H1 (cell line): ENCODE measurements at regions of chr16 and their contacts with region 1.

Region 1: GRCh38 chr16:71610936-71611871 is 14.8 kb upstream of the MARVELD3 start:
- DNase-seq: peak; percentile 53 to 98
- H3K4me3 ChIP-seq: peak overlapping the region in 1 of 4 experiments; percentile 38; a peak in 1 of 8 replicates
- H3K27ac ChIP-seq: no peak overlapping the region
- H3K4me1 ChIP-seq: peaks cover 0 to 2% (median 0%) of the 10 kb centered on the region in 4 experiments; a peak in 1 of 7 replicates
- H3K27me3 ChIP-seq: no peaks in the 10 kb centered on the region
- CTCF ChIP-seq: peak; percentile 84 to 95 (median 92)
- EP300 ChIP-seq: peak in 1 of 2 experiments; percentile 60; a peak in 1 of 3 replicates
- POLR2A ChIP-seq: no peak
- RAD21 ChIP-seq: peak; percentile 87 to 93

Region 2: GRCh38 chr16:71441348-71441781 is 169.8 kb before region 1 on chr16:
- CTCF ChIA-PET with region 1: interaction called, 10 read pairs
- POLR2A ChIA-PET with region 1: no interaction called
- DNase-seq: peak in 1 of 2 experiments; percentile 95
- H3K4me3 ChIP-seq: no peak overlapping the region
- H3K27ac ChIP-seq: no peak overlapping the region
- H3K4me1 ChIP-seq: no peaks in the 10 kb centered on the region; a peak in 1 of 7 replicates
- H3K27me3 ChIP-seq: no peaks in the 10 kb centered on the region
- CTCF ChIP-seq: peak; percentile 71 to 76 (median 74)
- EP300 ChIP-seq: no peak
- POLR2A ChIP-seq: no peak
- RAD21 ChIP-seq: peak; percentile 49 to 65

Region 3: DNA sequence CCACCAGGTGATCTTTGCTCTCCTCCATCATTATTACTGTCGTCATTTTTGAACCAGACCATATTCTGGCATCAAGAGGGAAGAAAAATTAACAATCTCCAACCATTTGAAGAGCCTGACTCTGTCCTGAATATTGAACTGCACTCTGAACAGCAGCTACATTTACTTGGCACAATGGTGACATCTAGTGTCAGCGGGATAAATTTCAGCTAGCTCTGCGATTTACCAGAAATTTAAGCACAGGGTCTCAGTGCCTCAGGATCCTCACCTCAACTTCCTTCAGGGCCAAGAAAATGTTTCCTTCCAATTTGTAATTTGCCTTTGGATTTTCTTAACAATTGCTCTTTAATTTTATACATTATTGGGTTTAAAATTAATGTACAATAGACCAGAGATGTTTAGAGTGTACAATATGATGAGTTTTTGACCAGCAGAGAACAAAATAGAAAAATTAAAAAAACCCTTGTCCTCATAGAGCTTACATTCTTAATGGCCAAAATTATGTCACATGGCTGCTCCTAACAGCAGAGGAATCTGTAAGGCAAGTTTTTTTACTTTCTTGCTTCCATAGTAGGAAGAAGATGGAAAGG is 111.3 kb before region 1 on chr16:
- CTCF ChIA-PET with region 1: interaction called, 16 read pairs
- POLR2A ChIA-PET with region 1: no interaction called
- DNase-seq: peak in 1 of 2 experiments; percentile 60
- H3K4me3 ChIP-seq: no peak overlapping the region
- H3K27ac ChIP-seq: no peak overlapping the region
- H3K4me1 ChIP-seq: no peaks in the 10 kb centered on the region
- H3K27me3 ChIP-seq: no peaks in the 10 kb centered on the region; a peak in 1 of 7 replicates
- CTCF ChIP-seq: peak in 2 of 3 experiments; percentile 81 to 83; a peak in 3 of 4 replicates
- EP300 ChIP-seq: no peak
- POLR2A ChIP-seq: no peak
- RAD21 ChIP-seq: peak; percentile 84 to 88

Region 4: GRCh38 chr16:71552698-71553451 is 58.3 kb before region 1 on chr16:
- CTCF ChIA-PET with region 1: interaction called, 11 read pairs
- POLR2A ChIA-PET with region 1: no interaction called
- DNase-seq: no peak
- H3K4me3 ChIP-seq: no peak overlapping the region
- H3K27ac ChIP-seq: no peak overlapping the region
- H3K4me1 ChIP-seq: no peaks in the 10 kb centered on the region
- H3K27me3 ChIP-seq: no peaks in the 10 kb centered on the region
- CTCF ChIP-seq: peak; percentile 5 to 64 (median 57)
- EP300 ChIP-seq: no peak
- POLR2A ChIP-seq: no peak
- RAD21 ChIP-seq: peak; percentile 62 to 72

Region 5: DNA sequence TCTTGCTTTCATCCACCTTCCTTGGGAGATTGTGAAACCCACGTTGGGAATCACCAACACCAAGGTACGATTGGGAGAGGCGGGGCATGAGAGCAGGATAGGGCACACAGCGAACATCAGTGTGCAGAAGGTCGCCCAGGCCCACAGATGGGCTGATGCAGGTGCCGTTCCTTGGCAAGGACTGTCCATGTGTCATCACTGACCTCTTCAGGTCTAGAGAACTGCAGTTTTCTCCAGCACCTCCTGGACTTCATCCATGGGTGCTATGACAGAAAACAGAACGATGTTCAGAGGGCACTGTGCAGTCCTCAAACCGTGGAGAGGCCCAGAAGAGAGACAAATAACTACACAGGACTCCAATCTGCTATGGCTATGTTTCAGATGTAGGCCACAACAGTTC is 10.4 kb before region 1 on chr16:
- CTCF ChIA-PET with region 1: interaction called, 14 read pairs
- POLR2A ChIA-PET with region 1: no interaction called
- DNase-seq: no peak
- H3K4me3 ChIP-seq: no peak overlapping the region
- H3K27ac ChIP-seq: no peak overlapping the region
- H3K4me1 ChIP-seq: no peaks in the 10 kb centered on the region
- H3K27me3 ChIP-seq: no peaks in the 10 kb centered on the region
- CTCF ChIP-seq: no peak
- EP300 ChIP-seq: no peak
- POLR2A ChIP-seq: no peak
- RAD21 ChIP-seq: no peak